ENCODE measurements at regions of chr16 and their contacts with region 1.

Region 1: GRCh38 chr16:77171745-77172635 is 19.0 kb upstream of the MON1B start:
- DNase-seq: no peak
- H3K4me3 ChIP-seq: no peak overlapping the region
- H3K27me3 ChIP-seq: no peaks in the 10 kb centered on the region
- CTCF ChIP-seq: peak; percentile 72

Region 2: GRCh38 chr16:75653922-75654321 is 1518.1 kb before region 1 on chr16:
- CTCF ChIA-PET with region 1: no interaction called
- POLR2A ChIA-PET with region 1: interaction called, 11 read pairs
- DNase-seq: peak; percentile 67
- H3K4me3 ChIP-seq: no peak overlapping the region
- H3K27me3 ChIP-seq: no peaks in the 10 kb centered on the region
- CTCF ChIP-seq: no peak

Region 3: DNA sequence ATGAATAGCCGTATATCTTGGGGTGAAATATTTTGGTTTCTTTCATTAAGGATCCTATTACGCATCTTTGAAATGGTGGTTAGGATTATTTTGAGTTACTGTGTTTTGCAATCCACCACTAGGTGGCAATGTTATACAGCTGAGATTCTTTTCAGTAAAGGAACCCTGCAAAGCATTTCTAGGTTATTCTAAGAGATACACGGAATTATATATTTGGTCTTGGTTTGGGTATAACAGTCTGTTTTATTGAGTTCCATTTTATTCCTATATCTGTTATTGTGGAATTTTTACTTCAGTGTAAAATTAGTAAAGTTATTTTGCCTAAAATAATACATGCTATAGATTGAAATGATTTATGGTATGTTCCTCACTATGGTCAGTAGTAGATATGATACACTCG is 1382.8 kb before region 1 on chr16:
- CTCF ChIA-PET with region 1: interaction called, 28 read pairs
- POLR2A ChIA-PET with region 1: no interaction called
- DNase-seq: peak; percentile 2
- H3K4me3 ChIP-seq: no peak overlapping the region
- H3K27me3 ChIP-seq: no peaks in the 10 kb centered on the region
- CTCF ChIP-seq: peak; percentile 75

Region 4: DNA sequence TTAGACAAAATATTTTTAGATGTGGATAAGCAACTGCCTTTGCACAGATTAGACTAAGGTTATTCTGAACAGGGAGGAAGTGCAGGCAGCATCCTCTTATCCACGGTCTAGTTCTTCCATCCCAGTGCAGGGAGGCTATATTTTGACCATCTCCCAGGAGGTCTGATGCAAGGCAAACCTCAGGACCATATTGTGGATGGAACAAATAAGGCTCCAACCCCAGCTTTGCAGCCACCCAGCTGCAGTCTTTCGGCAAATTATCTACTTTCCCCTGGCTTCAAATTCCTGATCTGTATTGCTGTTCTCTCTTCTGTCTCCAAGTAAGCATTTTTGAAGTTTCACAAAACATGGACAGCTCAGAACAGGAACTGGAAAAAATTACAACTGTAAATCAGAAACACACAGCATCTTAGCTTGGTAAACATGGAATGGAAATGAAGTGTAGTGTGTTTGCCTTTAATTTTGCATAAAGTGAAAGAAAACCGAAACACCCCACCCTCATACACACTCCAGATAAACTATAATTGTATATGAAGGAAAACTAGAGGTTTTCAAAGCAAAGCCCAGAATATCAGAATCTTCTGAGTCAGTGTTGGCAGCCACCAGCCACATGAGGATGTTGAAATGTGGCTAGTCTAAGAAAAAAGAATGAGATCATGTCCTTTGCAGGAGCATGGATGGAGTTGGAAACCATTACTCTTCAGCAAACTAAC is 14.5 kb before region 1 on chr16:
- CTCF ChIA-PET with region 1: interaction called, 12 read pairs
- POLR2A ChIA-PET with region 1: no interaction called
- DNase-seq: no peak
- H3K4me3 ChIP-seq: no peak overlapping the region
- H3K27me3 ChIP-seq: no peaks in the 10 kb centered on the region
- CTCF ChIP-seq: no peak